ENCODE measurements at regions of chr1 and their contacts with region 1.

Region 1: GRCh38 chr1:20212685-20213331 is 26.5 kb upstream of the PLA2G2C start:
- DNase-seq: peak; percentile 69
- ATAC-seq: peak; percentile 84 to 86

Region 2: GRCh38 chr1:20154306-20154831 is 58.4 kb before region 1 on chr1:
- intact Hi-C with region 1: no loop called
- DNase-seq: no peak
- ATAC-seq: no peak

Region 3: DNA sequence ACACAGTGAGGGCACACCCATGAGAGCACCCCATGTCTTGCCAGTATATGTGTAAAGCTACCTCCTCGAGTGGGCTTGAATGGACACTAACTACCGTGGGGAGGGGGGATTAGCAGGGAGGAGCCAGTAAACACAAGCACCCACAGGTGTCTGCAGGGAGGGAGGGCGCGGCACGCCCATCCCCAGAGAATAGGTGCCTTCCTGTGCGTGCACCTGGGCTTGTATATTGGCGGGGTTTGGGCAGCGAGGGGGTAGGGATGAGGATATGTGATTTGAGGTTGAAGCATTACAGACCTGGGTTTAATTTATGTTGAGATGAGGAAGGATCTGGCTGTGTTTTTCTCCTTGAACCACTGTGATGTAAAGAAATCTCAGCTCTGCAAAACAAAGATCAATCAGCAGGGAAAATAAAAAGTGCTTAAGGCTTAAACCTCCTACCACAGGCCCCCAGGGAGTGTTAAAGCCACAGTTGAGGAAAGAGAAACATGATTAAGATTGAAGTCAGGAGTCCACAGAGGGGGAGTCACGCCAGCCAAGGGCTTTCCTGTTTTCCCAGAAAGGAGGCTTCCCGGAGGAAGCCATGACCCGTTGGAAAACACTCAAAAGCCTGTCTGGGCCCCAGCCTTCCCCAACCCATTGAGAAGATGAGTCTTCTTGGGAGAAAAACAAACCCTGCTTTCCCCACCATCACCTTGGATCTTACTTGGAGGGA is 193.2 kb after region 1 on chr1:
- intact Hi-C with region 1: no loop called
- DNase-seq: no peak
- ATAC-seq: no peak

Region 4: GRCh38 chr1:20426923-20427322 is 214.1 kb after region 1 on chr1:
- intact Hi-C with region 1: loop called in 1 of 2 experiments (anchors 5 kb)
- DNase-seq: no peak
- ATAC-seq: no peak